Activated CD4-positive, alpha-beta memory T cell treated with anti-CD3 and anti-CD28 coated beads for 36 hours (primary cell): ENCODE measurements at regions of chr12 and their contacts with region 1.

Region 1: DNA sequence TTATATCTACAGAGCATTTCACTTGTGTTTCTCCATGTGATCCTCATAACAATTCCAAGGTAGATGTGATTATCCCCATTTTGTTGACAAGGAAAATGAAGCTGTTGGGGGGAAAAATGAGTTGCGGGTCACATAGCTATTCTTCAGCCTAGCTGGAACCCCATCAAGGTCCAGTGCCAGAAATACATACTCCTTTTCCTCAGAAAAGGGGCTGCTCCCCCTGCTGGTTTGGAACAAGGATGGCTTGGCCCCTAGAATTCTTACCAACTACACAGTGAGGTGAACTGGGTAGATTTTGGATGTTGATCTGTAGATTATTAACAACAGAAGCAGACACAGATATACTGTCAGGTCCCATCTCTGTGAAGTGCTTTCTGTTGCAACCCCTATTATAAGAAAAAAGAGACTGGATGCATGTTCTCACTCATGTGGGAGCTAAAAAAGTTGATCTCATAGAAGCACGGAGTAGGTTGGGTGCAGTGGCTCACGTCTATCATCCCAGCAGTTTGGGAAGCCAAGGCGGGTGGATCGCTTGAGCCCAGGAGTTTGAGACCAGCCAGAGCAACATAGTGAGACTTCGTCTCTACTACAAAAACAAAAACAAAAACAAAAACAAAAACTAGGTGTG is 8.9 kb downstream of the IKZF4 start:
- DNase-seq: peak; percentile 54
- H3K4me3 Mint-ChIP-seq: no peak overlapping the region
- H3K27ac Mint-ChIP-seq: no peak overlapping the region
- H3K4me1 Mint-ChIP-seq: peaks cover 19% of the 10 kb centered on the region
- H3K27me3 Mint-ChIP-seq: no peaks in the 10 kb centered on the region

Region 2: DNA sequence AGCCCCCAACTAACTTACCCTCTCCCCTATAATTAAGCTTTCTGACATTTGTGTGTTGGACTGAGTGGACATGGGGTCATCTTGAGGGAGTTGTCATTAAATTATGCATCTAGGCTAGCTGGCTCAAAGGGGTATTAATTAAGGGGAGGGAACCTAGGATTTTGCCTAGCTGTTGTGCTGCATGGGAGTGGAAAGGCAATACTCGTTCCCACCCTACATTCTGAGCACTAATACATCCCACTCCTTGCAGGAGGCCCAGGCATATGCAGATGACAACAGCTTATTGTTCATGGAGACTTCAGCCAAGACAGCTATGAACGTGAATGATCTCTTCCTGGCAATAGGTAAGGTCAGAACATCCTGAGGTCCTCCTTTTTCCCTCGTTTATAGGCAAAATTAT is 38.7 kb before region 1 on chr12:
- CTCF ChIA-PET with region 1: interaction called, 102 read pairs
- POLR2A ChIA-PET with region 1: no interaction called
- intact Hi-C with region 1: loop called (anchors 1 kb)
- DNase-seq: no peak
- H3K4me3 Mint-ChIP-seq: no peak overlapping the region
- H3K27ac Mint-ChIP-seq: no peak overlapping the region
- H3K4me1 Mint-ChIP-seq: peaks cover 2% of the 10 kb centered on the region
- H3K27me3 Mint-ChIP-seq: no peaks in the 10 kb centered on the region